Activated naive CD4-positive, alpha-beta T cell treated with anti-CD3 and anti-CD28 coated beads for 36 hours (primary cell): ENCODE measurements at regions of chr4 and their contacts with region 1.

Region 1: DNA sequence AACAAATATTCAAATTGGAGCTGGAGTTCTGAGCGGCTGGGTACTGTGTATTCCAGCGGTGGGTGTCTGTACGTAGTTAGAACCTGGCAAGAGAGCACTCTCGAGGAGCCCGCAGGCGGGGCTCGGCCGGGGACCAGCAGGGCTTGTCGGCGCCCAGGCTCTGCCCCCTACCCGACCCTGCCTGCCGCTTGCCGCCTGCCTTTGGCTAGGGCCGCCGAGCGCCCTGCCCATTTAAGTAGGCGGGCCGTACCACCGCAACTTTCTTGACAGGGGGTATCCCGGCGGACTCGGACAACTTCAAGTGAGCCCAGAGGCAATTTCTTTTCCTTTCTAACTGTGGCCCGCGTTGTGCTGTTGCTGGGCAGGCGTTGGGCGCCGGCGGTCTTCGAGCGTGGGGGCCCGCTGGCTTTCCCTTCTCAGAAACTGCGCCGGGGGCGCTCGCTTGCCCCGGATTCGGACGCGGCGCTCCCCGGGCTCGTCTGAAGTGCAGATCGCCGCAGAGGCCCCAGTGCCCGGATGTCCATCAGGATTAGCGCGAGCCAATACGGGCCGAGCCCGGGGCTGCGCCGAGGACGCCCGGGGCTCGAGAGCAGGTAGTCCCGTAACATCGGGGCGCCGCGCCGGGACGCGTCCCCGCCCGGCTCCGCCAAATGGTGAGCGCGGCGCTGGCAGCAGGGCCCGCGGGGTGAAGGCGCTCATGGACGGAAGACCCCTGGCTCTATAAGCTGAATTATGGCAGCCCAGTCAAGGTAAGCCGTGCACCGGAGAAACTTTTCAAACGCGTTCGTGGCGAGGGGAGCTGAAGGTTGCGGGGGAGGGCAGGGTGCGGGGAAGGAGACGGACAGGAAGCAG is 72.1 kb downstream of the AFF1 start:
- DNase-seq: peak; percentile 81
- H3K4me3 Mint-ChIP-seq: peak overlapping the region; percentile 89
- H3K27ac Mint-ChIP-seq: peak overlapping the region; percentile 96
- H3K4me1 Mint-ChIP-seq: peaks cover 50% of the 10 kb centered on the region
- H3K27me3 Mint-ChIP-seq: no peaks in the 10 kb centered on the region

Region 2: DNA sequence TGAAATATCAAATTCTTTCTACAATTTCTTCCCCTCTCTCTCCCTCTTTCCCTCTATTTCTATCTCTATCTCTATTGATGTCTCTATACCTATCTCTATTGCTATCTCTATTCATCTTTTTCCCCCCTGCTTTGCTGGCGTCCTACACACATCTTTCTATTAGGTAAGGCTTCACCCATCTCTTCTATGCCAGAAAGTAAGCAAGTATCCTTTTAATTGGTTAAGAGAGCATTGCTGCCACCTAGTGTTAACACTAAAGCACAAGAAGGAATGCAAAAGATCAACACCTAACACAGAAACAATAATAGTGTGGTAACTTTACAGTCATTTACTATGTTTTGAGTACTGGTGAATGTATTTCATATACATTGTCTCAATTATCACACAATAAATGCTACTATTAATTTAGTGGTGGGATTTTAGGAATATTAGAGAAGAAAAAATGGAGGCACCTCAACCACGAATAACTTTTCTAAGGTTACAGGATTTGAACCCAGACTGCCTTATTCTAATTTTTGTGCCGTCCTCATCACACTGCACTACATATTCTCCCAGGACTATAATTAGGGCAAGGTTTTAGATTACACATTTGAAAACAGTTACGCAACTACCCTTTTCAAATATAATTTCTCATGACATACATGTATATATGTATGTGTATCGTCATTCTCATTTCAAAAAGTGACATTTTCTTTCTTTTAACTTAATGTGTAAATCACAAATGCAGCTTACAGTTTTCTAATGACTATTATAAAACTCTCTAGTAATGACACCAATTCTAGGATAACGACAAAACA is 111.0 kb before region 1 on chr4:
- CTCF ChIA-PET with region 1: no interaction called
- intact Hi-C with region 1: no loop called
- DNase-seq: no peak
- H3K4me3 Mint-ChIP-seq: no peak overlapping the region
- H3K27ac Mint-ChIP-seq: no peak overlapping the region
- H3K4me1 Mint-ChIP-seq: peaks cover 5% of the 10 kb centered on the region
- H3K27me3 Mint-ChIP-seq: peaks cover 17% of the 10 kb centered on the region

Region 3: GRCh38 chr4:86961605-86962295 is 45.2 kb before region 1 on chr4:
- CTCF ChIA-PET with region 1: interaction called, 3 read pairs
- intact Hi-C with region 1: loop called (anchors 1 kb)
- DNase-seq: peak; percentile 48
- H3K4me3 Mint-ChIP-seq: no peak overlapping the region
- H3K27ac Mint-ChIP-seq: no peak overlapping the region
- H3K4me1 Mint-ChIP-seq: peaks cover 40% of the 10 kb centered on the region
- H3K27me3 Mint-ChIP-seq: no peaks in the 10 kb centered on the region

Region 4: DNA sequence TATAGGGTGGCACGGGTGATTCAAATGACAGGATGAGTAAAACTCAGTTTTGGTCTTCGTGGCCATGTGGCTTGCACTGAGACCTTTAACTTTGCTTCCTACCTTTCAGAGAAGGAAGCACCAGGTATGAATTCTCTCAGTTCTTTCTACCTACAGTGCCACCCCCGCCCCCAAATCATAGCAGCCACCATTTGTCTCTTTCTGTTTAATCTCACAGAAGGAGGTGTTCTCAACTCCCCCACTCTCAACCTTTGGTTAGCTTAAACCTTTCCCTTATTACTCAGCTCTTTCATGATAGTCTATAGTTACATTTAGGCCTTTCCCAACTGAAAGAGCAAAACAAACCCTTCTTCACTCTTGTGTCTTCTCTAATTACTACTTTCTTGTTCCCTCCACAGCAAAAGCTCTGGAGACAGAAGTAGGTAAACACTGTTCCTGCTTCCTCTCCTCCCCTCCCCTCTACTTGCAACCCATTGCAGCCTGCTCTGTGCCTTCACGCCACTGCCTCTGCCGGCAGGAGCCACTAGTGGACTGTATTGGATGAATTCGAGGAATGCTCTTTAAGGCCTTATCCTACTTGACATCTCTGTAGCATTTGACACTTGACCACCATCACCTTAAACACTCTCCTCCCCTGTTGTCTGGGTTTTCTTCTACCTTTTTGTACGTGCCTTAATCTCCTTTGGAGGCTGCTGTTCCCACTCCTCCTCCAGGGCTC is 51.6 kb after region 1 on chr4:
- CTCF ChIA-PET with region 1: interaction called, 4 read pairs
- intact Hi-C with region 1: loop called (anchors 1 kb)
- DNase-seq: peak; percentile 68
- H3K4me3 Mint-ChIP-seq: peak overlapping the region; percentile 2
- H3K27ac Mint-ChIP-seq: peak overlapping the region; percentile 24
- H3K4me1 Mint-ChIP-seq: peaks cover 51% of the 10 kb centered on the region
- H3K27me3 Mint-ChIP-seq: no peaks in the 10 kb centered on the region

Region 5: DNA sequence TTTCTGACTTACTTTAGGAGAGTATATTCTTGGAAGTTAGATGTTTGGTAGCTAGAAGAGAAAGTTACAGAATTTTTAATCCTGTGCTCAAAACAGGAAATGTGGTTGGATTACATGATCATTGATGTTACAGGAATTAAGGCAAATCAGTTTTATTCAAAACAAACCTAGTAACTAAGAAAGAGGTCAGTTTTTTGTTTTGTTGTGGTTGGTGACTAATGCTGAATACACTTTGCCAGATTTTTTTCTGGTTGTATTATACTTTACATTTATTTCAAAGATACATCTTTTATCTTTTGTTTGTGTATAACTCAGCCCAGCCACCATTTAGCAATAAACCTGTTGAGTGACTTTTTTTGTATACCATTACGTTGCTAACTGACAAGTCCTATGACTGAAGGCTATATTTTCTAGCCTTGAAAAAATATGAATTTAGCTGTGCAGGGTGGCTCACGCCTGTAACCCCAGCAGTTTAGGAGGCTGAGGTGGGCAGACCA is 96.8 kb after region 1 on chr4:
- CTCF ChIA-PET with region 1: interaction called, 3 read pairs
- intact Hi-C with region 1: loop called (anchors 1 kb)
- DNase-seq: no peak
- H3K4me3 Mint-ChIP-seq: peak overlapping the region; percentile 3
- H3K27ac Mint-ChIP-seq: peak overlapping the region; percentile 92
- H3K4me1 Mint-ChIP-seq: peaks cover 62% of the 10 kb centered on the region
- H3K27me3 Mint-ChIP-seq: no peaks in the 10 kb centered on the region

Region 6: DNA sequence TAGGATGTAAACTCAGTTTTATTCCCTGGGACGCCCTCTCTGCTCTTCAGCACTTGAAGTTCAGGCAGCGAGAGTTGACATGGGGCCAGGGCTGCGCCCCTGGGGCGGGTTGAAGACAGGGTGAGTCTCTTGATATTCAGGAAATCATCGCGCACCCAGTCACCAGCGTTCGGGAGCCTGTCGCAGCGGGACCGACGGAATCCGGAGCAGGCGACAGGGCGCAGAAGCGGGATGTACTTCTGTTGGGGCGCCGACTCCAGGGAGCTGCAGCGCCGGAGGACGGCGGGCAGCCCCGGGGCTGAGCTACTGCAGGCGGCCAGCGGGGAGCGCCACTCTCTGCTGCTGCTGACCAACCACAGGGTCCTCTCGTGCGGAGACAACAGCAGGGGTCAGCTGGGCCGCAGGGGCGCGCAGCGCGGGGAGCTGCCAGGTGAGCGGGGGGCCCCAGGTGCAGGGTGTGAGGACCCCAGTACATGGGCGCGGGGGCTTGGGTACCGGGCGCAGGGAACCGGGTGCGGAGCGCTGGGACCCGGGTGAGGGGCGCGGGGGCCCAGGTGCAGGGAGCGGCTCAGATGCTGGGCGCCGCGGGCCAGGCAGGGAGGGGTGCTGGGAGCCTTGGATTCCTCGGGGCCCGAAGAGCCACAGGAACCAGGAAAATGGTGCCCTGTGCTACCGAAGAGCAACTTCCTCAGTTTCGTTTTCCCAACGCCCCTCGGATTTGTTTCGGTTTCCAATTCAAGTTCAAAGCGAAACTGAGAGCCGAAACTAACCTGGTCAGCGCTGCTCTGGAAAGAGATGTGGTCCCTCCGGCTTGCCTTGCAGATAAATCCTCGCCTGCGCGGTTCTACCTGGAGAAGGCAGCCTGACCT is 1372.0 kb after region 1 on chr4 and contains the start of gene HERC6:
- CTCF ChIA-PET with region 1: no interaction called
- intact Hi-C with region 1: loop called (anchors 5 kb)
- DNase-seq: peak; percentile 84
- H3K4me3 Mint-ChIP-seq: peak within 1 kb of the TSS; percentile 85
- H3K27ac Mint-ChIP-seq: peak within 1 kb of the TSS; percentile 69
- H3K4me1 Mint-ChIP-seq: peaks cover 40% of the 10 kb centered on the region
- H3K27me3 Mint-ChIP-seq: no peaks in the 10 kb centered on the region
- total RNA-seq, gene HERC6: 9.9 to 10.2 TPM